ENCODE measurements at regions of chr18 and their contacts with region 1.

Region 1: GRCh38 chr18:33022370-33022769 is 249.5 kb upstream of the KLHL14 start:
- DNase-seq: no peak
- H3K4me3 ChIP-seq: no peak overlapping the region
- H3K27ac ChIP-seq: no peak overlapping the region
- H3K4me1 ChIP-seq: no peaks in the 10 kb centered on the region
- H3K27me3 ChIP-seq: no peaks in the 10 kb centered on the region
- CTCF ChIP-seq: no peak
- POLR2A ChIP-seq: no peak

Region 2: DNA sequence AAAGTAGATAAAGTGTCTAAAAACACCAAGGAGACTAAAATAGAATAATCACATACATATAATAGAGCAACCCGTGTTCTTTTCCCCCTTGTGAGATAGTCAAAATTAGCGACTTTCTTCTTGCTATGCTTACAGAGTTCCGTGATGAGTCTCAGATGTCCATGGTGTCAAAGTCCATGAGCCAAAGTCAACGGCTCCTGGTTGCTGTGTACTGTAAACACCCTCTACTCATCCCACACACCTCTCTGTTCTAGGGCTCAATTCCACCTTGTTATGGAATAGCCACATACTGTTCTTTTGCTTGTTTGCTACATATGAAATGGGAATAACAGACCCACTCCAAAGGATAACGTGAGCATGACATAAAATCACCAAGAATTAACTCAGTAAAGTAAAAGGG is 604.2 kb before region 1 on chr18:
- intact Hi-C with region 1: loop called (anchors 5 kb)
- DNase-seq: no peak
- H3K4me3 ChIP-seq: no peak overlapping the region
- H3K27ac ChIP-seq: no peak overlapping the region
- H3K4me1 ChIP-seq: peaks cover 6% of the 10 kb centered on the region
- H3K27me3 ChIP-seq: no peaks in the 10 kb centered on the region
- CTCF ChIP-seq: no peak
- POLR2A ChIP-seq: no peak

Region 3: DNA sequence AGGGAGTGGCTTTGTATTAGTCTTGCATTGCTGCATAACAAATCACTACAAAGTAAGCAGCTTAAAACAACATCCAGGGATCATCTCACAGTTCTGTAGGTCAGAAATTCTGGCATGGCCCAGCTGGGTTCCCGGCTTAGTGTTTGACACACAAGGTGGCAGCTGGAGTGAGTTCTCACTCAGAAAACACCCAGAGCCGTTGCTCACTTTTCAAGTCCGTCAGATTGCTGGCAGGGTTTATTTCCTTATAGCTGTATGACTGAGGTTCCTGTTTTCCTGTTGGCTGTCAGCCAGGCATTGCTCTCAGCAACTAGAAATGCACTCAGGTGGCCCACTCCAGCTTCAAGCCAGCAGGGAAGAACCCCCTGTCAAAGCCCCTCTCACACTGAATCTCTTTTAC is 94.0 kb after region 1 on chr18:
- intact Hi-C with region 1: no loop called
- DNase-seq: no peak
- H3K4me3 ChIP-seq: no peak overlapping the region
- H3K27ac ChIP-seq: no peak overlapping the region
- H3K4me1 ChIP-seq: no peaks in the 10 kb centered on the region
- H3K27me3 ChIP-seq: no peaks in the 10 kb centered on the region
- CTCF ChIP-seq: no peak
- POLR2A ChIP-seq: no peak

Measured in vagina (tissue), 2 donors.